Left cardiac atrium (tissue), 4 donors: ENCODE measurements at regions of chr14 and their contacts with region 1.

Region 1: DNA sequence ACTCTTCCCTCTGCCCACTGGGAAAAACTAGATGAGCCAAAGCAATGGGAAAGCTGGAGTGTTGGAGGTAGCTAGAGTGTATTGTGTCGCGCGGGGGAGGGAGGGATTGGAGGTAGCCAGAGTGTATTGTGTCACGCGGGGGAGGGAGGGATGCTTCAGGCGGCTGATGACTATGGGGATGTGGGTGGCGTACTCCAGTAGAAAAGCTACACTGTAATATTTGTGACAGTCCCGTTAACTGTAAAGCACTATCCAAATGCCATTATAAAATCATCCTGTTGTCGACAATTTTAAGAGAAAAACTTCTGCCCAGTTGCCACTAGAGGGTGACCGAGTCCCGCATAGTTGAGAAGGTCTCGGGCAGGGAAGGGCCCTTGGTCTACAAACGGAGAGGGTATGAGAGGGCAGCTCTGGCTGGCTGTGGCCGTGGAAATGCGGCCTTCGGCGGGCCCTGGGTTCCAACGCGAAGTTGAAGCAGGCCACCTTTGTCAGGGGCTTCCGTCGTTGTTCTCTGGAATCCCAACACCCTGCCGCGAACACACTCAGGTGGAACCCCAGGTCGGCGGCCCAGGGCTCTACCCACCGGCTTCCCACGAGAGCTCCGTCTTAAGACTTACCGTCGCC is 15.1 kb upstream of the PLEK2 start:
- DNase-seq: peak; percentile 75
- ATAC-seq: peak; percentile 90 to 94

Region 2: GRCh38 chr14:67191768-67192290 is 235.3 kb before region 1 on chr14:
- intact Hi-C with region 1: no loop called
- DNase-seq: no peak
- ATAC-seq: no peak

Region 3: GRCh38 chr14:67373347-67373746 is 53.7 kb before region 1 on chr14:
- intact Hi-C with region 1: no loop called
- DNase-seq: no peak
- ATAC-seq: no peak

Region 4: GRCh38 chr14:67559639-67560038 is 132.5 kb after region 1 on chr14:
- intact Hi-C with region 1: no loop called
- DNase-seq: no peak
- ATAC-seq: no peak

Region 5: DNA sequence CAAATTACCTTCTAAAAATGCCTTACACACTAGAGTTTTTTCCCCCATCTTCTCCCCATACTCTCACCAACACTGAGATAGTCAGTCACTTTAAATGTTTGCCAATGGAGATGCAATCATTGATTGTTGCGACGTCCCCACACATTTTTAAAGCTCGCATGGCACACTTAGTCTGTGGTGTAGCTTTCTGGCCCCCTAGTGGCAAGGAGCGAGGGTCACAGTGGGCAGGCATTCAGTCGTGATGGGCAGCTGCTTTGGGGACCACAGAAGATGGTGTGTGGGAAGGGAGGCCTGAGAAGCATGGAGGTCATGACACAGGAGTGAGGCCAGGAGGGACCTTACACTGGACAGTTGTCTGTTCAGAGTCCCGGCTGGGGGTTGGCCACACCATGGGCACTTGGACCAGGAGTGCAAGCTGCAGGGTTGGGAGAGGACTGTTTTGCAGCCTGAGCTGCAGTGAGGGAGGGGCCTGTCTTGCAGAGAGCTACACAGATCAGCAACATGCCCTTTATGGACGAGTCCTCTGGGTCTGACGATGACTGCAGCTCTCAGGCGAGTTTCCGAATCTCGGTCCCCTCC is 144.3 kb after region 1 on chr14:
- intact Hi-C with region 1: loop called (anchors 1 to 5 kb)
- DNase-seq: peak; percentile 74
- ATAC-seq: peak; percentile 76 to 85